PC-3 (cell line): ENCODE measurements at regions of chr9 and their contacts with region 1.

Region 1: DNA sequence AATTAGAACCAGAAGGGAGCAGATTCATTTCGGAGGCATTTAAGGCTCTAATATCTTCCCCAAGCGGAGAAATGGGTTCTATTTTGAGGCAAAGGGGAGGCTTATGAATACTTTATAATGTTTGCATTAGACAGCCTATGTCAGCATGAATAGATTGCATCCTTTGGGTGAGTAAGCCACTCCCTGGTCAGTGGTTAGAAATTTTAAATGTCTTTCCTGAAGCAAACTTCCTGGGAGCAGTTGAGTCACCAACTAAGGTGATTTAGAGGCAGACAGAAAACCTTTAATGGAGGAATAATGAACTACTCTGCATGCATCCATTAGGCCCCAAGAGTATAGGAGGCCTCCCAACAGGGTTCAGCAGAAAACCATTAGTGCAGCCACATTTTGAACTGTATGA is 204.9 kb downstream of the ELAVL2 start:
- DNase-seq: peak; percentile 92
- ATAC-seq: peak; percentile 79
- H3K4me3 ChIP-seq: 0 out of 2 replicates have a peak overlapping the region, but pooled peaks have one; percentile 20
- H3K27ac ChIP-seq: peak overlapping the region; percentile 100
- H3K4me1 ChIP-seq: peaks cover 39% of the 10 kb centered on the region
- H3K27me3 ChIP-seq: no peaks in the 10 kb centered on the region
- CTCF ChIP-seq: no peak

Region 2: GRCh38 chr9:23123048-23123632 is 498.0 kb before region 1 on chr9:
- CTCF ChIA-PET with region 1: no interaction called
- POLR2A ChIA-PET with region 1: no interaction called
- intact Hi-C with region 1: loop called (anchors 10 kb)
- DNase-seq: peak; percentile 52
- ATAC-seq: no peak; the same call in 1 of the 2 replicates
- H3K4me3 ChIP-seq: no peak overlapping the region
- H3K27ac ChIP-seq: no peak overlapping the region
- H3K4me1 ChIP-seq: no peaks in the 10 kb centered on the region
- H3K27me3 ChIP-seq: no peaks in the 10 kb centered on the region
- CTCF ChIP-seq: peak; percentile 78

Region 3: DNA sequence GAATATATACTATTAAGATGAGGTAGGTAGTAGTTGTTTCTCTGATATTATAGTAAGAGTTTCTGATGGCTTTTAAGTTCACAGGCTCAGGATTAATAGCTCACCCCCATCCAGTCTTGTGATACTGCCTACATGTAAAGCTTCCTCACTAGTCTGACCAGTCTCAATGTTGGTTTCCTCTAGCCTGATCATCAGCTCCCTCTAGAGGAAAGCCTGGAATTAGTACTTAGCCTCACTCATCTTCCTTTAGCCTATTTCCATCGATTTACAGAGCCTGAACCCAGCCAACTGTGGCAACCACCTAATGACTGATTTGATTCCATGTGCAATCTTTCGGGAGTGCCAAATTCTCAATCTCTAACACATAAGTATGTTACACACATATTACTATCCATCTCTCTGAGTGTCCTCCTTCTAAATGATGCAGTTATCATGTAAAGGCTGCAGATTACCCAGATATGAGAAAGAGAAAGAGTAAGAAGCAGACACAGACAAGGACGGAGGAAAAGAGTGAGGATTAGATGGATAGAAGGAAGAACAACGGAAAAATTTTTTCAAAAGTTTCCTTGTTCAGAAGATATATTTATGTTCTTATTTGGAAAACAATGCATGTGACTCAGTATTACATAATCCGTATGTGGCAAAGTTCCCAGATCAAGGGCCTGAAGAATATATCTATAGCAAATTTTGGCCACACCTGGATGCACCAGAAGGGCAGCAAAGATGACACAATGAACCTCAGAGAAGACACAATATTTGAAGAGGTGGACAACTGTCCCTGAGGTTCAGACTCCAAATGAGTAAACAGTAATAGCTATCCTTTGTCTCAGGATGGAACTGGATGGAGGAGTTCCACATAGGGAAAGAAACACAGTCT is 128.8 kb before region 1 on chr9:
- CTCF ChIA-PET with region 1: no interaction called
- POLR2A ChIA-PET with region 1: no interaction called
- intact Hi-C with region 1: loop called (anchors 2 kb)
- DNase-seq: peak; percentile 89
- ATAC-seq: peak; percentile 94
- H3K4me3 ChIP-seq: peak overlapping the region; percentile 56
- H3K27ac ChIP-seq: peak overlapping the region; percentile 95
- H3K4me1 ChIP-seq: peaks cover 19% of the 10 kb centered on the region
- H3K27me3 ChIP-seq: no peaks in the 10 kb centered on the region
- CTCF ChIP-seq: peak; percentile 83

Region 4: GRCh38 chr9:23555851-23556250 is 65.3 kb before region 1 on chr9:
- CTCF ChIA-PET with region 1: no interaction called
- POLR2A ChIA-PET with region 1: no interaction called
- intact Hi-C with region 1: no loop called
- DNase-seq: no peak
- ATAC-seq: no peak
- H3K4me3 ChIP-seq: no peak overlapping the region
- H3K27ac ChIP-seq: 0 out of 2 replicates have a peak overlapping the region, but pooled peaks have one; percentile 16
- H3K4me1 ChIP-seq: peaks cover 19% of the 10 kb centered on the region
- H3K27me3 ChIP-seq: no peaks in the 10 kb centered on the region
- CTCF ChIP-seq: no peak

Region 5: GRCh38 chr9:23598994-23599393 is 22.2 kb before region 1 on chr9:
- CTCF ChIA-PET with region 1: no interaction called
- POLR2A ChIA-PET with region 1: no interaction called
- intact Hi-C with region 1: loop called (anchors 1 kb)
- DNase-seq: peak; percentile 93
- ATAC-seq: peak; percentile 93
- H3K4me3 ChIP-seq: peak overlapping the region; percentile 25; the same call in 1 of the 2 replicates
- H3K27ac ChIP-seq: peak overlapping the region; percentile 99
- H3K4me1 ChIP-seq: peaks cover 61% of the 10 kb centered on the region
- H3K27me3 ChIP-seq: no peaks in the 10 kb centered on the region
- CTCF ChIP-seq: no peak

Region 6: GRCh38 chr9:23674016-23674585 is 52.9 kb after region 1 on chr9:
- CTCF ChIA-PET with region 1: no interaction called
- POLR2A ChIA-PET with region 1: no interaction called
- intact Hi-C with region 1: loop called (anchors 5 kb)
- DNase-seq: no peak
- ATAC-seq: no peak
- H3K4me3 ChIP-seq: no peak overlapping the region
- H3K27ac ChIP-seq: no peak overlapping the region
- H3K4me1 ChIP-seq: no peaks in the 10 kb centered on the region
- H3K27me3 ChIP-seq: no peaks in the 10 kb centered on the region
- CTCF ChIP-seq: no peak

Region 7: GRCh38 chr9:23702311-23702922 is 81.2 kb after region 1 on chr9:
- CTCF ChIA-PET with region 1: no interaction called
- POLR2A ChIA-PET with region 1: no interaction called
- intact Hi-C with region 1: loop called (anchors 1 kb)
- DNase-seq: peak; percentile 71
- ATAC-seq: peak; percentile 44
- H3K4me3 ChIP-seq: no peak overlapping the region
- H3K27ac ChIP-seq: peak overlapping the region; percentile 52
- H3K4me1 ChIP-seq: peaks cover 58% of the 10 kb centered on the region
- H3K27me3 ChIP-seq: no peaks in the 10 kb centered on the region
- CTCF ChIP-seq: peak; percentile 70